Esophagus muscularis mucosa (tissue), 4 donors: ENCODE measurements at regions of chr21 and their contacts with region 1.

Region 1: GRCh38 chr21:34073032-34073869 is at the starts of genes MRPS6 and SLC5A3:
- DNase-seq: no peak
- H3K4me3 ChIP-seq: peak within 1 kb of the TSS; percentile 78 to 88 (median 81)
- H3K27ac ChIP-seq: peak within 1 kb of the TSS; percentile 81 to 91 (median 88)
- H3K4me1 ChIP-seq: peaks cover 15 to 48% (median 42%) of the 10 kb centered on the region in 4 donors
- H3K27me3 ChIP-seq: no peaks in the 10 kb centered on the region
- CTCF ChIP-seq: peak in 1 of 3 experiments; percentile 15
- EP300 ChIP-seq: no peak
- POLR2A ChIP-seq: peak; percentile 54
- total RNA-seq, gene MRPS6: 19.5 to 44.0 (median 40.9) TPM
- total RNA-seq, gene SLC5A3: 7.3 to 15.4 (median 13.1) TPM

Region 2: GRCh38 chr21:33936301-33937038 is 136.8 kb before region 1 on chr21:
- intact Hi-C with region 1: loop called (anchors 5 kb)
- DNase-seq: no peak
- H3K4me3 ChIP-seq: no peak overlapping the region
- H3K27ac ChIP-seq: no peak overlapping the region
- H3K4me1 ChIP-seq: peaks cover 6 to 34% (median 29%) of the 10 kb centered on the region in 4 donors
- H3K27me3 ChIP-seq: no peaks in the 10 kb centered on the region
- CTCF ChIP-seq: no peak
- EP300 ChIP-seq: no peak
- POLR2A ChIP-seq: no peak

Region 3: DNA sequence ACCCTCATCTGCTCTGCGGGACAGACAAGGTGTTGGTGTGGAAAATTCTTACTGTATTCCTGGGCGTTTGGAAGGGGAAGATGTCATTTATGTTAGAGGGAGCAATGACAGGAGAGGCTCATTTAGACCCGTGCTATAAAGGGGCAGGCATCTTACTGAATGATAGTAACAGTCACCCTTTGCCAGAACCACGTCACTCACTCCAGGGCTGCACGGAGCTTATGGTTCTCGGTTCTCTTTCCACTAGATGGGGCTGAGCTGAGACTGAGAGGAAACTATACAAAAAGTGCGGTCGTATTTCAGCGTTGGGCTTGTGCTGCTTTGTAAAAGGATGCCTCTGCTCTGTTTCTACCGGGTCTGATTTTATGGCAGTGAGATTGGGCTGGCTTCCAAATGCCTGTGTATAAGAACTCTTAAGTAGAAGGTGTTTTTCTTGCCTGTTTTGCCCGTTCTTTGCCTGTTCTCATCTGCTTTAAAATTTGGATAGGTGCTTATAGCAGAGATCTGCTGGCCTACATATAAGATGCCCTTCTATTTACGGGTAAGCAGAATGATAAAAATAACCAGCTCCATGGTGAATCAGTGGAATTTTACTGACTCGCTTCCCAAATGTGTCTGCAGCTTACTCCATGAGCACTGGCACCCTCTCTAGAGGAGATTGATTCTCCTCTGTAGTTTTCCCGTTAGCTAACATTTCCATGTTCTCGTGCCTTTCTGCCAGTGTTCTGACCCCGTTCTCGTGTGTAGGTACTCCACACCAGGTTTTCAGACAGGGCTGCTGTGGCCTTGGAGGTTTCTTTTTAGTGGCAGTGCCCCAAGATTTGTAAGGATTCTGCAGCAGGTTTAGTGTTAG is 56.0 kb after region 1 on chr21:
- intact Hi-C with region 1: loop called (anchors 1 kb)
- DNase-seq: peak; percentile 74
- H3K4me3 ChIP-seq: peak overlapping the region; percentile 12 to 32 (median 31)
- H3K27ac ChIP-seq: peak overlapping the region; percentile 79 to 85 (median 84)
- H3K4me1 ChIP-seq: peaks cover 64 to 86% (median 79%) of the 10 kb centered on the region in 4 donors
- H3K27me3 ChIP-seq: no peaks in the 10 kb centered on the region
- CTCF ChIP-seq: peak in 2 of 3 experiments; percentile 17 to 44
- EP300 ChIP-seq: no peak
- POLR2A ChIP-seq: no peak

Region 4: GRCh38 chr21:34202553-34203372 is 129.5 kb after region 1 on chr21:
- intact Hi-C with region 1: loop called (anchors 5 kb)
- DNase-seq: no peak
- H3K4me3 ChIP-seq: peak overlapping the region; percentile 51 to 69 (median 54)
- H3K27ac ChIP-seq: peak overlapping the region; percentile 65 to 77 (median 74)
- H3K4me1 ChIP-seq: peaks cover 13 to 56% (median 34%) of the 10 kb centered on the region in 4 donors
- H3K27me3 ChIP-seq: no peaks in the 10 kb centered on the region
- CTCF ChIP-seq: no peak
- EP300 ChIP-seq: no peak
- POLR2A ChIP-seq: no peak

Region 5: GRCh38 chr21:34345091-34345871 is 272.0 kb after region 1 on chr21:
- intact Hi-C with region 1: loop called (anchors 5 kb)
- DNase-seq: no peak
- H3K4me3 ChIP-seq: no peak overlapping the region
- H3K27ac ChIP-seq: peak overlapping the region; percentile 55 to 66 (median 60)
- H3K4me1 ChIP-seq: peaks cover 24 to 42% (median 39%) of the 10 kb centered on the region in 4 donors
- H3K27me3 ChIP-seq: no peaks in the 10 kb centered on the region
- CTCF ChIP-seq: no peak
- EP300 ChIP-seq: no peak
- POLR2A ChIP-seq: no peak